ENCODE measurements at regions of chrX and their contacts with region 1.

Region 1: DNA sequence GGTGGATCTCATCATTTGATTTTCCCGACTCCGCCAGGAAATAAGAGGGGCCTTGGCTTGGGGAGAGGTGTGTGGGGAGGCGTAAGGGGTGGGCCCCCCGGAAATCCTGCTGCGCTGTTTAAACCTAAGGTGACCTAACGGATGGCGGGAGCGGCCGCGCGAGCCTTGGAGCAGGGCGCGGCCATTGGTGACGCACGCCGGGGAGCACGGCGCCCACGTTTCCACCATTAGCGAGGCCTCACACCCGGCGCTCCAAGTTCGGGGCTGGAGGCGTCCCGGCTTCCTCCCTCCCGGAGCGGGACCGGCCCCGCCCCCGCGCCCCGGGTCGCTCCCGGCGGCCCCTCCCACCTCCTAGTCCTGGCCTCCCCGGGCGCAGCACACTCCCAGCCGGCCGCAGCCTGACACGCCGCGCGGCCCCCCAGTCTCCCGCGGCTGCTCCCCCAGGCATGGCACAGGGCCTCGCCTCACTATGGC is at the start of gene SMS:
- DNase-seq: peak; percentile 59
- H3K4me3 Mint-ChIP-seq: peak within 1 kb of the TSS; percentile 74
- H3K27ac Mint-ChIP-seq: peak within 1 kb of the TSS; percentile 64
- H3K4me1 Mint-ChIP-seq: peaks cover 28% of the 10 kb centered on the region
- H3K27me3 Mint-ChIP-seq: no peaks in the 10 kb centered on the region
- total RNA-seq, gene SMS: 73.9 TPM

Region 2: GRCh38 chrX:21926527-21927278 is 13.7 kb before region 1 on chrX:
- CTCF ChIA-PET with region 1: interaction called, 3 read pairs
- POLR2A ChIA-PET with region 1: interaction called, 11 read pairs
- DNase-seq: no peak
- H3K4me3 Mint-ChIP-seq: peak overlapping the region; percentile 24
- H3K27ac Mint-ChIP-seq: peak overlapping the region; percentile 72
- H3K4me1 Mint-ChIP-seq: peaks cover 33% of the 10 kb centered on the region
- H3K27me3 Mint-ChIP-seq: no peaks in the 10 kb centered on the region